Breast epithelium (tissue), 4 donors: ENCODE measurements at regions of chr13 and their contacts with region 1.

Region 1: GRCh38 chr13:101289764-101290163 is 126.5 kb downstream of the NALCN start:
- DNase-seq: no peak
- H3K4me3 ChIP-seq: no peak overlapping the region
- H3K27ac ChIP-seq: no peak overlapping the region
- H3K4me1 ChIP-seq: no peaks in the 10 kb centered on the region
- H3K27me3 ChIP-seq: no peaks in the 10 kb centered on the region
- CTCF ChIP-seq: no peak
- POLR2A ChIP-seq: no peak

Region 2: DNA sequence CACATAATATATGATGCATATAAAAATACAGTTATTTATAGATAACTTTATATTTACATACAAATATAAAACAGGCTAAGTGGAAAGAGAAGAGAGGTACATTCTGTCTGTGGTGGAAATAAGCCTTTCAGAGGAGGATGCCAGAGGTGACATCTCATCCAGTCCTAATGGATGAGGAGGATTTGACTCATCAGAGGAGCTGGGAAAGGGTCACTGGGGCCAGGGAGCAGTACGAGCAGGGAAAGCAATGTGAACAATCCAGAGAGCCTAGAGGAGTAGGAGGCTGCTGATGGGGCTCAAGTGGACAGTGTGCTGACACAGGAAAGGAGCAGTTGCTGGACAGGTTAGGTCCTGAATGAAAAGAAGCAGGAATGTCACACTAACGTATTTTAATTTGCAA is 108.0 kb after region 1 on chr13:
- intact Hi-C with region 1: loop called (anchors 5 kb)
- DNase-seq: no peak
- H3K4me3 ChIP-seq: no peak overlapping the region
- H3K27ac ChIP-seq: no peak overlapping the region
- H3K4me1 ChIP-seq: no peaks in the 10 kb centered on the region
- H3K27me3 ChIP-seq: no peaks in the 10 kb centered on the region
- CTCF ChIP-seq: no peak
- POLR2A ChIP-seq: no peak

Region 3: DNA sequence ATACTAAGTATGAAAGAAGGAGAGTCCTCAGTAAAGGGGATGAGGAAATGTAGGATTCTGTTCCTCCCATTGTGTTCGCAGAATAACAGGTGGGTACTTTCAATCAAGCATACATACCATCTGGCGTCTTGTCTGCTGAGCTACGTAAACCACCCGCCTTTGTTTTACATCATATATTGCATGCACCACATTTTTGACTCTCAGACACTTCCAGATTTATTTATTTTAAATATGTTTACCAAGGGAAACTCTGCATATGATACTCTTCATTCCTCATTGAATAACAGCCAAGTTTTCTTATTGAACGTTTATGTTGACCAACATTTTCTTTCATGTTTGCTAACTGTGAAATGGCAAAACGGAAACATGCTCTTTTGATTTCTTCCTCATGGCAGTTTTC is 938.0 kb after region 1 on chr13:
- intact Hi-C with region 1: no loop called
- DNase-seq: no peak
- H3K4me3 ChIP-seq: no peak overlapping the region
- H3K27ac ChIP-seq: no peak overlapping the region
- H3K4me1 ChIP-seq: no peaks in the 10 kb centered on the region
- H3K27me3 ChIP-seq: no peaks in the 10 kb centered on the region
- CTCF ChIP-seq: no peak
- POLR2A ChIP-seq: no peak